B cell (primary cell): ENCODE measurements at regions of chr7 and their contacts with region 1.

Region 1: GRCh38 chr7:91843831-91844230 is 36.7 kb downstream of the MTERF1 start:
- DNase-seq: no peak
- ATAC-seq: no peak
- H3K4me3 ChIP-seq: no peak overlapping the region
- H3K4me3 Mint-ChIP-seq: peak overlapping the region; percentile 11
- H3K27ac ChIP-seq: peak overlapping the region in 1 of 2 donors; percentile 12
- H3K27ac Mint-ChIP-seq: peak overlapping the region; percentile 16
- H3K4me1 ChIP-seq: peaks cover 9% of the 10 kb centered on the region in 2 donors
- H3K4me1 Mint-ChIP-seq: peaks cover 12% of the 10 kb centered on the region
- H3K27me3 ChIP-seq: no peaks in the 10 kb centered on the region
- H3K27me3 Mint-ChIP-seq: no peaks in the 10 kb centered on the region
- CTCF ChIP-seq: no peak

Region 2: DNA sequence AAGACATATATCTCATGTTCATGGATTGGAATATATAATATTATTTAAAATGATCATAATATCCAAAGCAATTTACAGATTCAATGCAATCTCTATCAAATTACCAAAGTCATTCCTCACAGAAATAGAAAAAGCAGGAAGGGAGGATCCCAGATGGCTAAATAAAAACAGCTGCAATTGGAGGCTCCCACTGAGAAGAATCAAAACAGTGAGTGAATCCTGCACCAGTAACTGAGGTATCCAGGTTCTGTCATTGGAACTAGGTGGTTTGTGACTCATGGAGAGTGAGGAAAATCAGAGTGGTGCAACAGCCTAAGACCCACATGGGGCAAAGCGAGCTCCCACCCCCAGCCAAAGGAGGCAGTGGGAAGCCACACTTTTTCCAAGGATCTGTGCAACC is 91.7 kb before region 1 on chr7:
- CTCF ChIA-PET with region 1: no interaction called
- POLR2A ChIA-PET with region 1: no interaction called
- intact Hi-C with region 1: no loop called
- DNase-seq: no peak
- ATAC-seq: no peak
- H3K4me3 ChIP-seq: no peak overlapping the region
- H3K4me3 Mint-ChIP-seq: no peak overlapping the region
- H3K27ac ChIP-seq: no peak overlapping the region
- H3K27ac Mint-ChIP-seq: no peak overlapping the region
- H3K4me1 ChIP-seq: no peaks in the 10 kb centered on the region
- H3K4me1 Mint-ChIP-seq: no peaks in the 10 kb centered on the region
- H3K27me3 ChIP-seq: no peaks in the 10 kb centered on the region
- H3K27me3 Mint-ChIP-seq: peaks cover 4% of the 10 kb centered on the region
- CTCF ChIP-seq: no peak

Region 3: GRCh38 chr7:91826377-91826776 is 17.5 kb before region 1 on chr7:
- CTCF ChIA-PET with region 1: interaction called, 12 read pairs
- POLR2A ChIA-PET with region 1: no interaction called
- intact Hi-C with region 1: no loop called
- DNase-seq: no peak
- ATAC-seq: no peak
- H3K4me3 ChIP-seq: no peak overlapping the region
- H3K4me3 Mint-ChIP-seq: no peak overlapping the region
- H3K27ac ChIP-seq: no peak overlapping the region
- H3K27ac Mint-ChIP-seq: no peak overlapping the region
- H3K4me1 ChIP-seq: no peaks in the 10 kb centered on the region
- H3K4me1 Mint-ChIP-seq: no peaks in the 10 kb centered on the region
- H3K27me3 ChIP-seq: no peaks in the 10 kb centered on the region
- H3K27me3 Mint-ChIP-seq: no peaks in the 10 kb centered on the region
- CTCF ChIP-seq: no peak